T-cell (primary cell): ENCODE measurements at regions of chr18 and their contacts with region 1.

Region 1: GRCh38 chr18:51051105-51051712 is 21.2 kb downstream of the SMAD4 start:
- DNase-seq: peak in 9 of 35 experiments; percentile 8 to 74 (median 17)
- ATAC-seq: peak; percentile 80 to 88 (median 85)
- H3K4me3 ChIP-seq: no peak overlapping the region
- H3K4me3 Mint-ChIP-seq: no peak overlapping the region
- H3K27ac ChIP-seq: no peak overlapping the region
- H3K27ac Mint-ChIP-seq: peak overlapping the region in 1 of 2 donors; percentile 44
- H3K4me1 ChIP-seq: peaks cover 0 to 6% of the 10 kb centered on the region in 2 experiments
- H3K4me1 Mint-ChIP-seq: peaks cover 34 to 47% (median 40%) of the 10 kb centered on the region in 3 donors
- H3K27me3 ChIP-seq: no peaks in the 10 kb centered on the region
- H3K27me3 Mint-ChIP-seq: no peaks in the 10 kb centered on the region

Region 2: GRCh38 chr18:50819728-50820378 is 231.4 kb before region 1 on chr18 and contains the start of gene MRO:
- CTCF ChIA-PET with region 1: interaction called, 13 to 22 read pairs
- POLR2A ChIA-PET with region 1: no interaction called
- DNase-seq: peak; percentile 59 to 87 (median 75)
- ATAC-seq: peak; percentile 97 to 100 (median 98)
- H3K4me3 ChIP-seq: peak within 1 kb of the TSS; percentile 27 to 52
- H3K4me3 Mint-ChIP-seq: no peak within 1 kb of the TSS
- H3K27ac ChIP-seq: no peak within 1 kb of the TSS
- H3K27ac Mint-ChIP-seq: no peak within 1 kb of the TSS
- H3K4me1 ChIP-seq: peaks cover 4 to 16% of the 10 kb centered on the region in 2 experiments
- H3K4me1 Mint-ChIP-seq: no peaks in the 10 kb centered on the region
- H3K27me3 ChIP-seq: peaks cover 3 to 15% of the 10 kb centered on the region in 2 experiments
- H3K27me3 Mint-ChIP-seq: peaks cover 12 to 15% of the 10 kb centered on the region in 2 donors
- total RNA-seq, gene MRO: not detected

Region 3: GRCh38 chr18:51029694-51030536 is 21.3 kb before region 1 on chr18 and contains the start of gene SMAD4:
- CTCF ChIA-PET with region 1: interaction called, 3 to 11 read pairs
- POLR2A ChIA-PET with region 1: interaction called, 4 to 7 read pairs
- DNase-seq: peak; percentile 91 to 99 (median 96)
- ATAC-seq: peak; percentile 78 to 83 (median 80)
- H3K4me3 ChIP-seq: peak within 1 kb of the TSS; percentile 73 to 81
- H3K4me3 Mint-ChIP-seq: peak within 1 kb of the TSS; percentile 98
- H3K27ac ChIP-seq: peak within 1 kb of the TSS; percentile 87
- H3K27ac Mint-ChIP-seq: peak within 1 kb of the TSS; percentile 97
- H3K4me1 ChIP-seq: peaks cover 28 to 31% of the 10 kb centered on the region in 2 experiments
- H3K4me1 Mint-ChIP-seq: peaks cover 55 to 69% (median 57%) of the 10 kb centered on the region in 3 donors
- H3K27me3 ChIP-seq: no peaks in the 10 kb centered on the region
- H3K27me3 Mint-ChIP-seq: no peaks in the 10 kb centered on the region
- total RNA-seq, gene SMAD4: 80.9 to 124 (median 117) TPM